B cell (primary cell): ENCODE measurements at regions of chr17 and their contacts with region 1.

Region 1: DNA sequence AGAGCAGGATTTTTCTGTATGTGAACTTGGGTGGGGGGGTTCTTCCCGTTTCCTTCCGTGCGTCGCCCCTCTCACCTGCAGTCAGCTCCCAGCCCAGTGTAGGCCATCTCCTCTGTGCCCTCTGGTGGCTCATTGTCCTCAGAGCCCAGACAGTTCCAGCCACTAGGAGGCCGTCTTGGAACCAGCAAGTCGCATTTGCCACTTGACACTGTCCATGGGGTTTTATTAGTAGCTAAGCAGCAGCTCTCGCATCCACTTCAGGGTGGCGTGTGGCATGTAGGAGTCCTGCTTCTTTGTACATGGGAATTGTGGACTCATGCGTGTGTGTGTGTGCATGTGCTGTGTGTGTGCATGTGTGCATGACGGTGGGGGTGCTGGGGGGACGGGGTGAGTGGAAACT is 74.0 kb downstream of the SEC14L1 start:
- DNase-seq: peak; percentile 24
- ATAC-seq: no peak
- H3K4me3 ChIP-seq: no peak overlapping the region
- H3K4me3 Mint-ChIP-seq: no peak overlapping the region
- H3K27ac ChIP-seq: no peak overlapping the region
- H3K27ac Mint-ChIP-seq: no peak overlapping the region
- H3K4me1 ChIP-seq: peaks cover 40 to 41% of the 10 kb centered on the region in 2 donors
- H3K4me1 Mint-ChIP-seq: peaks cover 53% of the 10 kb centered on the region
- H3K27me3 ChIP-seq: peaks cover 0 to 4% (median 0%) of the 10 kb centered on the region in 4 experiments
- H3K27me3 Mint-ChIP-seq: no peaks in the 10 kb centered on the region
- CTCF ChIP-seq: no peak

Region 2: GRCh38 chr17:77109764-77110359 is 104.9 kb before region 1 on chr17:
- CTCF ChIA-PET with region 1: interaction called, 5 read pairs
- POLR2A ChIA-PET with region 1: interaction called, 4 read pairs
- intact Hi-C with region 1: loop called (anchors 5 kb)
- DNase-seq: peak; percentile 58
- ATAC-seq: no peak
- H3K4me3 ChIP-seq: peak overlapping the region in 3 of 5 experiments; percentile 15 to 42 (median 18)
- H3K4me3 Mint-ChIP-seq: peak overlapping the region; percentile 78
- H3K27ac ChIP-seq: no peak overlapping the region
- H3K27ac Mint-ChIP-seq: peak overlapping the region; percentile 17
- H3K4me1 ChIP-seq: peaks cover 25 to 43% of the 10 kb centered on the region in 2 donors
- H3K4me1 Mint-ChIP-seq: peaks cover 47% of the 10 kb centered on the region
- H3K27me3 ChIP-seq: no peaks in the 10 kb centered on the region
- H3K27me3 Mint-ChIP-seq: no peaks in the 10 kb centered on the region
- CTCF ChIP-seq: no peak